IMR-90 (cell line): ENCODE measurements at regions of chr13 and their contacts with region 1.

Region 1: DNA sequence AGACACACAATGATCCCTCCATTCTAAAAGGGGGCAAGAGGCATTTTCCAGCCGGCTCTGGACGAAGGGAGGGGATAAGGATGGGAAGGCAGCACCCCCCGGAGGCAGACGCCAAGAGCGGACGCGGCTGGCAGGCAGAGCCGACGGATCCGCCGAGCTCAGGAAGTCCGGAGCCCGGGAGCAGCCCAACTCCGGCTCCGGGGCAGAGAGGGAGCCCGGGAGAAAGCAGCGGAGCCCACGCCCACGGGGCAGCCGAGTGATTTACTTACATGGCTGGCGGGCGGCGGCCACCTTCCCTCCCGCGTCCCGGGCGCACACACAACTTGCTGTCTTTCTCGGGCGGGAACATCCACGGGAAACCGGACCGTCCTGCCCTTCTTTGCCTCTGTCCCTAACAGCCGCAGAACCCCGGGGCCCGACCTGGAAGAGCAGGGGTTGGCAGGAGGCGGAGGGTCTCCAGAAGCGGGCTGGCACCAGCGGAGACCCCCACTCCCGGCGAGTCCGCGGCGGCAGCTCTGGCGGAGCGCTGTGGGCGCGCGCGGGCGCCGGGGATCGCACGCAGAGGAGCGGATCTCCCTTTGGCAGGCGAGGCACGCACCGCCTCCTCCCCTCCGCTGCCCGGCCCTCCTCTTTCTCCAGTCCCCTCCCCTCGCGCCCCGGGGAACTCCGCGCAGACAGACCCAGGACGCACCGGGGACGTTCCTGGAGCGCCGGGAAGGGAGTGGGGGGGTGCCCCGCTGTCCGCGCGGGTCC is at the start of gene LHFPL6:
- DNase-seq: peak; percentile 77
- ATAC-seq: peak; percentile 94
- H3K4me3 ChIP-seq: peak within 1 kb of the TSS; percentile 80
- H3K27ac ChIP-seq: peak within 1 kb of the TSS; percentile 81
- H3K4me1 ChIP-seq: peaks cover 8% of the 10 kb centered on the region
- H3K27me3 ChIP-seq: no peaks in the 10 kb centered on the region
- CTCF ChIP-seq: peak; percentile 60
- POLR2A ChIP-seq: no peak
- RAD21 ChIP-seq: peak; percentile 71
- total RNA-seq, gene LHFPL6: 24.7 and 25.3 TPM in 2 replicates

Region 2: DNA sequence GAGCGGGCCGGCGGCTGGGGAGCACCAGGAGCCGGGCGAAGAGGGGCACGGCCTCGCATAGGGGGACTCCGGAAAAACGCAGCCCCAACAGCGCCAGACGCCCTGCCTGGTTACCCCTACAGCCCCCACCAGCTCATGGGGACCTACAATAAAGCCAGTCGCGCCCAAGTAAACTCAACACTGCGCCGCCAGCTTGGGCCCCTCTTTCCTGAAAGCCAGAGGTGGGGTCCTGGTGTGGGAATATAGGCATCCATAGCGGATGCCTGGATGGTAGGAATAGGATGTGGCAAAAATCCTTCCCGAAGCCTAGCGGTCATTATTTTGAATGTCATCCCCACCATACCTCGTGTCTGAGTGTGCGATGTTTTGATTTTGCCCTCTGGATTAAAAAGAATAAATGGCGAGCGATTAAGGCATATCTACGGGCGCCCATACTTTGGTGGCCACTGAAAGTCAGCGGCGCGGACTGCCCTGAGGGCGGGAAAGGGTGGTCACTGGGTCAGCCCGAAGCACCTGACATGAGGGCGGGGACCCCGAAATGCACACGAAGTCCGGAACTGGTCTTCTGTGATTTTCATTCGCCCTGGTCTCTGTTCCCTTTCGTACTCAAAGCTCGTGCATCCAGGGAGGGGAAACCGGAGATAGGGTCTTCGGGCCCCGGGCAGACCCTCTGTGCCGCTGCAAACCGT is 564.8 kb before region 1 on chr13 and contains the starts of genes NHLRC3 and PROSER1:
- CTCF ChIA-PET with region 1: no interaction called
- POLR2A ChIA-PET with region 1: no interaction called
- dilution Hi-C with region 1: no loop called
- in situ Hi-C with region 1: no loop called
- intact Hi-C with region 1: loop called (anchors 5 kb)
- DNase-seq: peak; percentile 88
- ATAC-seq: peak; percentile 92
- H3K4me3 ChIP-seq: peak within 1 kb of the TSS; percentile 85
- H3K27ac ChIP-seq: peak within 1 kb of the TSS; percentile 77
- H3K4me1 ChIP-seq: peaks cover 2% of the 10 kb centered on the region; the same call in 1 of the 2 replicates
- H3K27me3 ChIP-seq: no peaks in the 10 kb centered on the region
- CTCF ChIP-seq: no peak
- POLR2A ChIP-seq: peak; percentile 75; the same call in 1 of the 2 replicates
- RAD21 ChIP-seq: no peak
- total RNA-seq, gene NHLRC3: 3.0 and 5.6 TPM in 2 replicates
- total RNA-seq, gene PROSER1: 2.0 and 4.2 TPM in 2 replicates

Region 3: GRCh38 chr13:39073992-39074391 is 528.8 kb before region 1 on chr13:
- CTCF ChIA-PET with region 1: no interaction called
- POLR2A ChIA-PET with region 1: no interaction called
- dilution Hi-C with region 1: no loop called
- in situ Hi-C with region 1: no loop called
- intact Hi-C with region 1: no loop called
- DNase-seq: no peak
- ATAC-seq: no peak
- H3K4me3 ChIP-seq: no peak overlapping the region
- H3K27ac ChIP-seq: no peak overlapping the region
- H3K4me1 ChIP-seq: no peaks in the 10 kb centered on the region
- H3K27me3 ChIP-seq: peaks cover 2% of the 10 kb centered on the region; the same call in 1 of the 2 replicates
- CTCF ChIP-seq: no peak
- POLR2A ChIP-seq: no peak
- RAD21 ChIP-seq: no peak

Region 4: DNA sequence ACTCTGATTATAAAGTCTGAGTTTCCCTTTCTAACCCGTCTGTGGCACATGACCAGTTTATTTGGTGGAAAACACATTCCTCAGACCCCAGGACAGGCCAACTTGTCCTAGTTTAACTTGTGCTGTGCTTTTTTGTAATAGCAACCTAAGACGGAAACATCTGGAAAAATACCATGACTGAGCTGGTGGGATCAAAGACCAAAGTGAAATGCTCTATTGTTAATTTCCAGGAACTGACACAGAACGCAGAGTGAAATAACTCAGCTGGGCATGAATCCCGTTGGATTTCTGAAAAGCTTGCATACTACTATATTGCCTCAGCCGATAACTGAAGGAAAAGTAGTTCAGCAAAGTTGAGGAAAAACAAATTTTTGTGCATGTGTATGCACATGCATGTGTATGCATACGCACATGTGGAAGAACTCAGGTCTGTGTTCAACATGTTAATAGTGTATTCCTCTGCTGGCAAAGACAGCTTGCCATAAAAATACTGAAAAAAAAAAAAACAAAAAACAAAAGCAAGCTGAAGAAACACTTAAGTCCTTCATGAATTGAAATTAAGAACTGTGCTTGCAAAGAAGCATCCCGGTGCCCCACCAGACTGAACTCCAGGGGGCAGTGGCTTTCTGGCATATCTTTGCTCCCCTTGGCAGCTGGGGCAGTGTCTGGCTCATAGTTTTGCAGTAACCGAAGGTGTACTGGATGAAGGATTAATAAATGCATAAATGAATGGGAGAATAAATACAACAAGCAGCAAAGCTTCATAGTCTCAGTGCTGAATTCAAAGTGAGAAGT is 187.6 kb before region 1 on chr13:
- CTCF ChIA-PET with region 1: no interaction called
- POLR2A ChIA-PET with region 1: no interaction called
- dilution Hi-C with region 1: no loop called
- in situ Hi-C with region 1: loop called (anchors 10 kb)
- intact Hi-C with region 1: loop called (anchors 1 kb)
- DNase-seq: peak; percentile 43
- ATAC-seq: no peak; the same call in 1 of the 2 replicates
- H3K4me3 ChIP-seq: no peak overlapping the region
- H3K27ac ChIP-seq: no peak overlapping the region
- H3K4me1 ChIP-seq: peaks cover 2% of the 10 kb centered on the region; the same call in 1 of the 2 replicates
- H3K27me3 ChIP-seq: no peaks in the 10 kb centered on the region
- CTCF ChIP-seq: peak; percentile 53
- POLR2A ChIP-seq: no peak
- RAD21 ChIP-seq: peak; percentile 67

Region 5: GRCh38 chr13:39527961-39528660 is 74.7 kb before region 1 on chr13:
- CTCF ChIA-PET with region 1: no interaction called
- POLR2A ChIA-PET with region 1: interaction called, 3 read pairs
- dilution Hi-C with region 1: no loop called
- in situ Hi-C with region 1: no loop called
- intact Hi-C with region 1: loop called (anchors 2 kb)
- DNase-seq: peak; percentile 96
- ATAC-seq: peak; percentile 96
- H3K4me3 ChIP-seq: no peak overlapping the region
- H3K27ac ChIP-seq: peak overlapping the region; percentile 93
- H3K4me1 ChIP-seq: peaks cover 21% of the 10 kb centered on the region
- H3K27me3 ChIP-seq: no peaks in the 10 kb centered on the region
- CTCF ChIP-seq: no peak
- POLR2A ChIP-seq: no peak
- RAD21 ChIP-seq: no peak

Region 6: GRCh38 chr13:39616087-39616694 is 13.4 kb after region 1 on chr13:
- CTCF ChIA-PET with region 1: interaction called, 14 read pairs
- POLR2A ChIA-PET with region 1: no interaction called
- dilution Hi-C with region 1: no loop called
- in situ Hi-C with region 1: no loop called
- intact Hi-C with region 1: no loop called
- DNase-seq: peak; percentile 68
- ATAC-seq: peak; percentile 92
- H3K4me3 ChIP-seq: no peak overlapping the region
- H3K27ac ChIP-seq: no peak overlapping the region
- H3K4me1 ChIP-seq: no peaks in the 10 kb centered on the region
- H3K27me3 ChIP-seq: peaks cover 4% of the 10 kb centered on the region; the same call in 1 of the 2 replicates
- CTCF ChIP-seq: peak; percentile 93
- POLR2A ChIP-seq: no peak
- RAD21 ChIP-seq: peak; percentile 89

Region 7: GRCh38 chr13:40564342-40565001 is 961.7 kb after region 1 on chr13:
- CTCF ChIA-PET with region 1: no interaction called
- POLR2A ChIA-PET with region 1: no interaction called
- dilution Hi-C with region 1: no loop called
- in situ Hi-C with region 1: no loop called
- intact Hi-C with region 1: no loop called
- DNase-seq: no peak
- ATAC-seq: no peak
- H3K4me3 ChIP-seq: no peak overlapping the region
- H3K27ac ChIP-seq: no peak overlapping the region
- H3K4me1 ChIP-seq: no peaks in the 10 kb centered on the region
- H3K27me3 ChIP-seq: peaks cover 2% of the 10 kb centered on the region
- CTCF ChIP-seq: no peak
- POLR2A ChIP-seq: no peak
- RAD21 ChIP-seq: no peak